IMR-90 (cell line): ENCODE measurements at regions of chr20 and their contacts with region 1.

Region 1: DNA sequence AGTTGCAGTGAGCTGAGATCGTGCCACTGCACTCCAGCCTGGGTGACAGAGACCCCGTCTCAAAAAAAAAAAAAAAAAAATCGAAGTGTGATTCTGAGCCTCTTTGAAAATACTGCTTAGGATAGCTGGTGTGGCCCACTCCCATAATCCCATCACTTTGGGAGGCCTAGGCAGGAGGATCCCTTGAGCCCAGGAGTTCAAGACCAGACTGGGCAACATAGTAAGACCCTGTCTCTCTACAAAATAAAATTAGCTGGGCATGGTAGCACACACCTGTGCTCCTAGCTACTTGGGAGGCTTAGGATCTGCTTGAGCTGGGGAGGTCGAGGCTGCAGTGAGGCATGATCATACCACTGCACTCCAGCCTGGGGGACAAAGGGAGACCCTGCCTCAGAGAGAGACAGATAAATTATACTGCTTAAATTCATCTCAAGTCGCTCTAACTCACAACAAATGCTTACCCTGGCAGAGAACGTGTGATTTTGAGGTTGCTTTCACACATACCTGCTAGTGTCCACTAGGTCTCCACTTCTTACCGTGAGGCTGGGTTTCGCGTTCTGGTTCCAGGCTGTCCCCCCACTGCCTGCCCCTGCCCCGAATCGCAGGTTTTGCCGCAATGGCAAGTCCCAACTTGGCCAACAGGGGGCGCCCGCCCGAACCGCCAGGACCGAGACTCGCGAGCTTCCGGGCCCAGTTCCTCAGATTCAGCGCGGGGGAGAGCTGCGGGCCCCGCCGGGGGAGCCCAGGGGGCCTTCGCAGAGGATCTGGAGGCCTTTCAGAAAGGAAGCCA is 12.3 kb upstream of the TMC2 start:
- DNase-seq: peak; percentile 66
- ATAC-seq: peak; percentile 75
- H3K4me3 ChIP-seq: peak overlapping the region; percentile 61
- H3K27ac ChIP-seq: peak overlapping the region; percentile 92
- H3K4me1 ChIP-seq: peaks cover 6% of the 10 kb centered on the region
- H3K27me3 ChIP-seq: no peaks in the 10 kb centered on the region
- CTCF ChIP-seq: peak; percentile 82
- POLR2A ChIP-seq: peak; percentile 46; the same call in 1 of the 2 replicates
- RAD21 ChIP-seq: peak; percentile 37

Region 2: GRCh38 chr20:2178318-2179232 is 345.5 kb before region 1 on chr20:
- CTCF ChIA-PET with region 1: no interaction called
- POLR2A ChIA-PET with region 1: no interaction called
- dilution Hi-C with region 1: no loop called
- in situ Hi-C with region 1: no loop called
- intact Hi-C with region 1: no loop called
- DNase-seq: peak; percentile 6
- ATAC-seq: no peak
- H3K4me3 ChIP-seq: no peak overlapping the region
- H3K27ac ChIP-seq: no peak overlapping the region
- H3K4me1 ChIP-seq: no peaks in the 10 kb centered on the region
- H3K27me3 ChIP-seq: peaks cover 35% of the 10 kb centered on the region
- CTCF ChIP-seq: no peak
- POLR2A ChIP-seq: no peak
- RAD21 ChIP-seq: no peak

Region 3: DNA sequence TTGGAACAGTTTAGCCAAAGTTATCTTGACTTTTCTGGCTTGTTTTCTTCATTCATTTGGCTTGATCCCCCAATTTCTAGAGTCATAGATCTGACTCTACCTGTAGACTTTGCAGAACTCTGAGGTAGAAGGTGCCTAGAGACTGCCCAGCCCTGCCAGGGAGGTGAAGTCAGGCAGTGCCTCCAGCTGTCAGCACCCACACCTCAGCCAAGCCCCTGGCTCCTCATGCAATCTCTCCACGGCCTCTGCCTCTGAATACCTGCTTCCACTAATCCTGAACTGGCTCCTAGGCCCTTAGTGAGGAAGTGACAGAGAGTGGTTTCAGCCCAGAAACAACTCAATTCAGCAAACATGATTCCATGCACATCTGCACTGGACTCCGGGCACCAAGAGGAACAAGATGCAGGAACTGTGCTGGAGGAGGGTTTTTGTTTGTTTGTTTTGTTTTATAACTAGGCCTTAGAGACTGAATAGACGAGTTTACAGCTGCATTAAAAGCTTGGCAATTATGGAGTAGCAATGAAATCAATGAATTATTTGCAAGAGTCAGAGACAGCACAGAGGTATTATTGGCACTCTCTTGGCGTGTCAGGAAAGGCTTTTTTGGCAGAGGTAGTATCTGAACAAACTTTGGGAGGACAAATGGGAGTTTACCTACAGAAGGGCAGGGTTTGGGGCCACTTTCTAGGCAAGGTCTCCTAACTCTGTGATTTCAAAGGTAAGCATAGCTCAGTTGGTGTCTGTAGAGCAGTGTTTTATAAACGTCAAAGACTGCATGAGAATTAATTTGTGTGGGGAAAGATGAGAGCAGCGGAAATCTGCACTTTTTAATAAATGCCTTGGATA is 203.1 kb before region 1 on chr20:
- CTCF ChIA-PET with region 1: no interaction called
- POLR2A ChIA-PET with region 1: no interaction called
- dilution Hi-C with region 1: no loop called
- in situ Hi-C with region 1: no loop called
- intact Hi-C with region 1: no loop called
- DNase-seq: no peak
- ATAC-seq: no peak
- H3K4me3 ChIP-seq: no peak overlapping the region
- H3K27ac ChIP-seq: no peak overlapping the region
- H3K4me1 ChIP-seq: no peaks in the 10 kb centered on the region
- H3K27me3 ChIP-seq: no peaks in the 10 kb centered on the region; the same call in 1 of the 2 replicates
- CTCF ChIP-seq: no peak
- POLR2A ChIP-seq: no peak
- RAD21 ChIP-seq: no peak

Region 4: GRCh38 chr20:2470423-2471193 is 53.5 kb before region 1 on chr20 and contains the start of gene SNRPB:
- CTCF ChIA-PET with region 1: interaction called, 5 read pairs
- POLR2A ChIA-PET with region 1: no interaction called
- dilution Hi-C with region 1: no loop called
- in situ Hi-C with region 1: no loop called
- intact Hi-C with region 1: loop called (anchors 1 kb)
- DNase-seq: peak; percentile 99
- ATAC-seq: peak; percentile 91
- H3K4me3 ChIP-seq: peak within 1 kb of the TSS; percentile 76
- H3K27ac ChIP-seq: peak within 1 kb of the TSS; percentile 91
- H3K4me1 ChIP-seq: peaks cover 7% of the 10 kb centered on the region
- H3K27me3 ChIP-seq: no peaks in the 10 kb centered on the region
- CTCF ChIP-seq: no peak
- POLR2A ChIP-seq: peak; percentile 87
- RAD21 ChIP-seq: peak; percentile 6; the same call in 1 of the 2 replicates
- total RNA-seq, gene SNRPB: 103 and 109 TPM in 2 replicates

Region 5: GRCh38 chr20:2508631-2509467 is 15.3 kb before region 1 on chr20 and contains the start of gene ZNF343:
- CTCF ChIA-PET with region 1: interaction called, 5 read pairs
- POLR2A ChIA-PET with region 1: no interaction called
- dilution Hi-C with region 1: no loop called
- in situ Hi-C with region 1: no loop called
- intact Hi-C with region 1: loop called (anchors 2 kb)
- DNase-seq: peak; percentile 77
- ATAC-seq: peak; percentile 95
- H3K4me3 ChIP-seq: peak within 1 kb of the TSS; percentile 77
- H3K27ac ChIP-seq: peak within 1 kb of the TSS; percentile 81
- H3K4me1 ChIP-seq: peaks cover 2% of the 10 kb centered on the region; the same call in 1 of the 2 replicates
- H3K27me3 ChIP-seq: no peaks in the 10 kb centered on the region
- CTCF ChIP-seq: no peak
- POLR2A ChIP-seq: no peak
- RAD21 ChIP-seq: no peak
- total RNA-seq, gene ZNF343: 18.9 and 26.2 TPM in 2 replicates

Region 6: DNA sequence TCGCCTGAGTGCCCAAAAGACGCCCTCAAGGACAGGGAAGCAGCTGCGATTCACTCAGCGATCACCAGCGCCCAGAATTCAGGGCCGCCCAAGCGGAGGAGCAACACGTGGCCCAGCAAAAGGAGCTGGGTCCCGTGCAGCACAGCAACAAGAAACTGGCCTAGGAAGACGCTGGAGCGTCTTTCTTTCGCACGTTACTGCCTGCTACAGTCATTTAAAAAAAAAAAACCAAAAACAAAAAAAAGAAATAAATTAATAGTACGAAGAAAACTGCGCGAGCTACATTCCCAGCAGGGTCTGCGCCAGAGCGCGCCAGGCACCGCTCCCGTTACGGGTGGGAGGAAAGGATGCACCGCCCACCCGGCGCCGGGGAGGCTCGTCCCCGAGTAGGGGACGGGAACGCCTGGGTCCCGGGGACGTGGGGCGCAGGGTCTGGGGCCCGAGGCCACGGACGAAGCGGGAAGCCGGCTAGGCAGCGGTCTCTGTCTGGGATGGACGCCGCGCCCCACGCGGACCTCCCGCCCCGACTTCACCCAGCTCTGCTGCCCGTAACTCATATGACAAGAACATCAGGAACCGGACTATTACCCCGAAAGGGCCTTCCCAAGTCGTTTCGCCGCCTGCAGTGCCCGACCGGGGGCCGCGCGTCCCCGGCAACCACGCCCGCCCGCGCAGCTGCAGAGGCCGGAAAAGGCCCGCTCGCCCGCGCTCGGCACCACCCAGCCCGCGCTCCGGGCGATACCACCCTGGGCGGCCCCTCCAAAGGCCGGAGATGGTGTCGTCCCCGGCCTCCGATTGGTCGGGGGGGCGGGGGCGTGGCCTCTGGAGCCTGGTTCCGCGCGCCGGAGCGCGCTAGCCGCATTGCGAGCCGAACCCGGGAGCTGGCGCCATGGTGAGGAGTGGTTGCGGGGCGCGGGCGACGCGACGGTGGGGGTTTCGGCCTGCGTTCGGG is 127.9 kb after region 1 on chr20 and contains the start of gene NOP56:
- CTCF ChIA-PET with region 1: no interaction called
- POLR2A ChIA-PET with region 1: no interaction called
- dilution Hi-C with region 1: no loop called
- in situ Hi-C with region 1: no loop called
- intact Hi-C with region 1: loop called (anchors 1 kb)
- DNase-seq: peak; percentile 86
- ATAC-seq: peak; percentile 96
- H3K4me3 ChIP-seq: peak within 1 kb of the TSS; percentile 90
- H3K27ac ChIP-seq: peak within 1 kb of the TSS; percentile 86
- H3K4me1 ChIP-seq: peaks cover 5% of the 10 kb centered on the region
- H3K27me3 ChIP-seq: no peaks in the 10 kb centered on the region
- CTCF ChIP-seq: no peak
- POLR2A ChIP-seq: peak; percentile 96
- RAD21 ChIP-seq: no peak
- total RNA-seq, gene NOP56: 170 and 231 TPM in 2 replicates